ENCODE measurements at regions of chr3 and their contacts with region 1.

Region 1: DNA sequence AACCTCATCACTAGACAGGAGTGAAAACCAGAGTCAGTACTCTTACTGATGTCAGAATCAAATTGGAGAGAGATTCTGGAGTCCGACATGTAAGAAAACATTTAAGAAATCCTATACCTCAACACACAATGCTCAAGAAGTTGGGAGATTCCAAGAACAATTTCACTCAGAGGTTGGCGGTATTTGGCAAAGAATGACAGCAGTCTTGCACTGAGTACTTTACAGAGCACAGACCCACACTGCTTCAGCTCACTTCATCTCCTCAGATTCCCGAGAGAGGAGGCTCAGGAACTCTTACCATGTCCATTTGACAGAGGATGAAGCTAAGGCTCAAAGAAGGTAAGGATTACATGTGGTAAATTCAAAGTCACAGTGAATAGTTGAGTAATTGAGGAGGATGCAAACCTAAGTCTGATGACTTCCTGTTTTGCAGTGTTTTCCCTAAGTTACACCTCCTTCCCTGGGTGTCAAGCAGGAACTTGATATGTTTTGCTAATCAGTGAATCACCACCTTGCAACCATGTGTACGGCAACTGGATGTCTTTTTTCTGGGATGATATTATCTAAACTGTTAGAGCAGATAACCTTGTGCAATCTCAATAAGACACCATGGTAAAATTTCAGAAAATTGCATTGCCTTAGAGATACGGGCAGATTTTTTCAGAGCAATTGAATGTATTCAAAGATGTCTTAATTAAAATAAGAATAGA is 61.3 kb upstream of the MME start:
- DNase-seq: peak; percentile 65
- H3K4me3 ChIP-seq: no peak overlapping the region
- H3K27ac ChIP-seq: no peak overlapping the region
- H3K4me1 ChIP-seq: peaks cover 5% of the 10 kb centered on the region
- H3K27me3 ChIP-seq: no peaks in the 10 kb centered on the region
- CTCF ChIP-seq: no peak

Region 2: DNA sequence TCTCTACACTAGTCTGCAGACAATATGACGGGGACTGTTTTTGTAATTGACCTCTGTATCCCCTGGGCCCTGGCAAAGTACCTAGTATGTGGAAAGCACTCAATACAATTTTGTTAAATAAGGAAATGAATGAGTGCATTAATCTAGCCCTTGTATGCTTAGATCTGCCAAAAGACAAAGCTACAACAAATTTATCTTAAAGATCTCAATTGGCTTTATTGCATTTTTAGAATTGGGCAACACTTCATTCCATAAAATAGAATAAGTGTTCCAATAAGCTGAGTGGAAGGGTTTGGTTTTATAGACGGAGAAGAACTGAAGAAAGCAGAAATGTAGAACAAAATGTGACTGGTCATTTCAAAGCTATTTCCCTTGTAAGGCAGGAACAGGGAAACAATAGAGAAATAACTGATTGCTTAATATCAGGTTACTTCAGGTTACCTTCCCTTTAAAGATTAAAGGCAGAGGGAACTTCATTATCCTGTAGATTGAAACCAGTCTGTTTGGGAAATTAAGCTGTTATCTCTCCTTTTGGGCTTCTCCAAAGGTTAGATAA is 46.9 kb before region 1 on chr3:
- CTCF ChIA-PET with region 1: no interaction called
- dilution Hi-C with region 1: no loop called
- in situ Hi-C with region 1: no loop called
- intact Hi-C with region 1: loop called (anchors 5 kb)
- DNase-seq: peak; percentile 82
- H3K4me3 ChIP-seq: peak overlapping the region in 2 of 3 experiments; percentile 1 to 3
- H3K27ac ChIP-seq: peak overlapping the region; percentile 83
- H3K4me1 ChIP-seq: peaks cover 36% of the 10 kb centered on the region
- H3K27me3 ChIP-seq: no peaks in the 10 kb centered on the region
- CTCF ChIP-seq: no peak

Region 3: GRCh38 chr3:155065537-155065936 is 46.8 kb after region 1 on chr3:
- CTCF ChIA-PET with region 1: no interaction called
- dilution Hi-C with region 1: no loop called
- in situ Hi-C with region 1: no loop called
- intact Hi-C with region 1: loop called (anchors 5 kb)
- DNase-seq: peak; percentile 92
- H3K4me3 ChIP-seq: no peak overlapping the region
- H3K27ac ChIP-seq: peak overlapping the region; percentile 26
- H3K4me1 ChIP-seq: peaks cover 6% of the 10 kb centered on the region
- H3K27me3 ChIP-seq: no peaks in the 10 kb centered on the region
- CTCF ChIP-seq: no peak